Endothelial cell of umbilical vein (primary cell): ENCODE measurements at regions of chr15 and their contacts with region 1.

Region 1: DNA sequence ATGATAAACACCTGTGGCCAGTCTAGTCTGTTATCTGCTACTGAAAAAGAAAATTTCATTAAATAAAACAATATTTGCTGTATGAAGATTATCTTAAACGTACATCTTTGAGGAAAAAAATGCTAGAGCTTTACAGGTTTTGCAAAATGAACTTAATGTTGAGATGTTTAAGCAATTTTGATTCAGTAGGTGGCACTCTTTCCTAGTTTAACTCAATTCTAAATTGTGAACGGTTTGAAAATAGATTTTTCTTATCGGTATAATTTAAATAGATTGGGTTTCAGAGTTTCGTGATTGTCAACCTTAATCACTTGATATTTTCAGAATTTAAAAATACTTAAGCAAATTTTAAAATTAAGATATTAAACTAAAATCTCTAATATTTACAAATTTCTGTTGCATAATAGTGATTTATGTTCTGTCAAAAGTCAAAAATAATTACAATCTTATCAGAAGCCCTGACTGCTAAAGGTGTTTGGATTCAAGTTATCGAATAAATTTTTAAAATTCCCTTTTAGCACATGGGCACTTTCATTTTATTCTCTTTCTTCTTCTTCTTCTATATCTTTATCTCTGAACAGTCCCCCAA is 7.0 kb upstream of the RNF111 start:
- DNase-seq: peak; percentile 59
- H3K4me3 ChIP-seq: no peak overlapping the region
- H3K27ac ChIP-seq: no peak overlapping the region
- H3K4me1 ChIP-seq: peaks cover 10% of the 10 kb centered on the region
- H3K27me3 ChIP-seq: peaks cover 4 to 7% of the 10 kb centered on the region in 2 experiments
- CTCF ChIP-seq: peak; percentile 19 to 21
- POLR2A ChIP-seq: no peak

Region 2: GRCh38 chr15:58924327-58924726 is 56.1 kb before region 1 on chr15:
- CTCF ChIA-PET with region 1: no interaction called
- POLR2A ChIA-PET with region 1: no interaction called
- dilution Hi-C with region 1: no loop called
- intact Hi-C with region 1: no loop called
- DNase-seq: no peak
- H3K4me3 ChIP-seq: no peak overlapping the region
- H3K27ac ChIP-seq: no peak overlapping the region
- H3K4me1 ChIP-seq: no peaks in the 10 kb centered on the region
- H3K27me3 ChIP-seq: no peaks in the 10 kb centered on the region
- CTCF ChIP-seq: no peak
- POLR2A ChIP-seq: no peak

Region 3: GRCh38 chr15:59104912-59105732 is 124.7 kb after region 1 on chr15 and contains the start of gene CCNB2:
- CTCF ChIA-PET with region 1: interaction called, 13 read pairs
- POLR2A ChIA-PET with region 1: no interaction called
- dilution Hi-C with region 1: no loop called
- intact Hi-C with region 1: loop called (anchors 1 kb)
- DNase-seq: peak; percentile 93
- H3K4me3 ChIP-seq: peak within 1 kb of the TSS; percentile 68 to 95 (median 68)
- H3K27ac ChIP-seq: peak within 1 kb of the TSS; percentile 57
- H3K4me1 ChIP-seq: peaks cover 11% of the 10 kb centered on the region
- H3K27me3 ChIP-seq: no peaks in the 10 kb centered on the region
- CTCF ChIP-seq: no peak
- POLR2A ChIP-seq: peak; percentile 83
- total RNA-seq, gene CCNB2: 62.8 and 65.2 TPM in 2 replicates

Region 4: GRCh38 chr15:59138243-59138642 is 157.8 kb after region 1 on chr15:
- CTCF ChIA-PET with region 1: interaction called, 16 read pairs
- POLR2A ChIA-PET with region 1: no interaction called
- dilution Hi-C with region 1: no loop called
- intact Hi-C with region 1: loop called (anchors 1 kb)
- DNase-seq: peak; percentile 64
- H3K4me3 ChIP-seq: no peak overlapping the region
- H3K27ac ChIP-seq: no peak overlapping the region
- H3K4me1 ChIP-seq: no peaks in the 10 kb centered on the region
- H3K27me3 ChIP-seq: no peaks in the 10 kb centered on the region
- CTCF ChIP-seq: peak; percentile 86 to 91
- POLR2A ChIP-seq: no peak

Region 5: DNA sequence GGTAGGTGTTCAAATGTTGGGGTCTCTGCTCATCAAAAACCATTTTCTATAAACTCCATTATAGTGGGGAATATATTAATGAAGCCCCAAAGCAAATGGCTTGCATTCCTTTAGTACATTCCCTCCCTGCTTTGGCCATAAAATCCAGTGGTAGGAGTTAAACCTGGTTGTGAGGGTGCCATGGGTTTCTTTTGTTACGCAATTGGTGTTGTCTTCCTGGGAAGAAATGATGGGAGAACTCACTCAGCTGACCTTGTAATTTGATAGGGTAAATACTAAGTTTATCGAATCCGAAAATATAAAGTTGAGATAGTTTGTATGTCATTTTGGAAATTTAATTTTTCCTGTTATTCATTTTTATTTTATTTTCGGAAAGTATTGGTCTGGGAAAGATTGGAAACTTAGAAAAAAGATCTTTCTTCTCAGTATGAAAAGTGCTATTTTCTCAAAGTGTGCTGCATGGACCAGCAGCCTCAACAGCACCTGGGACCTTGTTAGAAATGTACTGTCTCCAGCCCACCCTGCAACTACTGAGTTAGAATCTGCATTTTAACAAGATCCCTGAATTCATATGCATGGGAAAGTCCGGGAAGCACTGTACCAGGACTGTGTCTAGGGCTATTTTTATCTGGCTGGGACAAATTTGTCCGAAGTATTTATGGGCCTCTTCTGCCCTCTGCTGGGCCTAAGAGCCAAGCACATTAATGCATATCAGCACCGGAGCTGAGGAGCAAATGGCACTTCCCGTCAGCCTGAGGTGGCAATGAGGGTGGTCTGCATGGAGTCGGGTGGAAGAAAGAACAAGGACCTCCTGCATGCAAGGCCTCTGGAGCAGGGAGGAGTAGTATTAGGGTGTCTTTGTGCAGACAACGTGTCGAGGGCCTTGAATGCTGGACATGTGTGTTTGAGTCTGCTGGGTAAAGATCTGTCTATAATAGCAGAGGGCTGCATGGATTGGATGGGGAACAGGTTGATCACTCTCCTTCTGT is 512.2 kb after region 1 on chr15:
- CTCF ChIA-PET with region 1: interaction called, 21 read pairs
- POLR2A ChIA-PET with region 1: no interaction called
- dilution Hi-C with region 1: no loop called
- intact Hi-C with region 1: loop called (anchors 1 kb)
- DNase-seq: peak; percentile 73
- H3K4me3 ChIP-seq: no peak overlapping the region
- H3K27ac ChIP-seq: no peak overlapping the region
- H3K4me1 ChIP-seq: no peaks in the 10 kb centered on the region
- H3K27me3 ChIP-seq: no peaks in the 10 kb centered on the region
- CTCF ChIP-seq: peak; percentile 68 to 86
- POLR2A ChIP-seq: no peak

Region 6: DNA sequence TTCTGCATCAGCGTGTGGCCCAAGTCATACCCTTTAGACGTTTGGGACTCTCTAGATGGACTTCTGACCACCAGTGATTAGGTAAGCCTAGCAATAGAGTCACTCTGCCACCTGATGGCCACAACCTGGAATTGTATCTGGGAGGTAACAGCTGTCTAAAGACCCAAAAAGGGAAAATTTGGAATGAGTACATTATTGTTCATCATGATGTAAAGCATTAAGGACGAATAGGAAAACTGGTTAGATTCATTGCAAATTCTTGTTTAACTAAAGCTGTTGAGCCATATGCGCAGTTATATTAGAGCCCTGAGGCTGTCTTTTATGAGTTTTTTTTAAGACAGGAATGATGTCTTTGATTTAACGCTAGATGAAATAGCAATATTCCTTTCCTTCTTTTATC is 521.2 kb after region 1 on chr15:
- CTCF ChIA-PET with region 1: interaction called, 28 read pairs
- POLR2A ChIA-PET with region 1: no interaction called
- dilution Hi-C with region 1: no loop called
- intact Hi-C with region 1: no loop called
- DNase-seq: peak; percentile 72
- H3K4me3 ChIP-seq: no peak overlapping the region
- H3K27ac ChIP-seq: no peak overlapping the region
- H3K4me1 ChIP-seq: no peaks in the 10 kb centered on the region
- H3K27me3 ChIP-seq: peaks cover 4 to 6% of the 10 kb centered on the region in 2 experiments
- CTCF ChIP-seq: peak; percentile 54 to 66
- POLR2A ChIP-seq: no peak